ENCODE measurements at regions of chr4 and their contacts with region 1.

Region 1: DNA sequence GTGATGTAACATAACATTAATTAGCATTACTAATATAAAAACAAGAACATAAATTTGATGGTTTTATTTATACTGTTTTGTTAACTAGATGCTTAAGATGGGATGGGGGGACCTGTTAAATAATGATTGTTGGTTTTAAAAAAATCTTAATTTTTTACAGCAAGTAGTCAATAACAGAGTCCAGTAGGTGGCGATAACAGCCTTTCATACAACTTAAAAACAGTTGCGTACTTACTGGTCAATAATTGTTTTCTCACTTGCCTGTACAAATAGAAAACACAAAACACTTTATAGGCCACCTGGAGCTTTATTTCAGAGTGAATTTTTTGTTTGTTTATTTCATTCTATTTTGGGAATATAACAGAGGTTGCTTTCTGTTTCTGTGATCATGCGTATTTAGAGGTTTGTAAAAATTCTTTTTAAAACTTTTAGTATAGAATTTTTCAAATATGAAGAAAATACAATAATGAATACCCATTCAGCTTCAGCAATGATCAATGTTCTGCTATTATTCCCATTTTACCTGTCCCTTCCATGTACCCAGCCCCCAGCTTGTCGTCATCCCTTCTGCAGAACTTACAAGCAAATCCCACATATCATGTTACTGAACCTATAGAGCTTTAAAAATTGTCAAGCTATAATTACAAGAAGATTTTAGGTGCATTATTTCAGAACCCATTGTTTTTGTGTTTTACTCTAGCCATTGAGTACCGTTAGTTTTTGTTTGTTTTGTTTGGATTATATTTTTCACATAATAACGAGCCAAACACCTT is 97.1 kb downstream of the MRPL1 start:
- DNase-seq: no peak
- H3K4me3 ChIP-seq: peak overlapping the region in 1 of 2 donors; percentile 25
- H3K27ac ChIP-seq: no peak overlapping the region
- H3K4me1 ChIP-seq: no peaks in the 10 kb centered on the region
- H3K27me3 ChIP-seq: no peaks in the 10 kb centered on the region
- CTCF ChIP-seq: peak; percentile 24 to 59 (median 46)

Region 2: GRCh38 chr4:78517050-78517652 is 557.4 kb after region 1 on chr4:
- intact Hi-C with region 1: loop called (anchors 5 kb)
- DNase-seq: no peak
- H3K4me3 ChIP-seq: no peak overlapping the region
- H3K27ac ChIP-seq: no peak overlapping the region
- H3K4me1 ChIP-seq: no peaks in the 10 kb centered on the region
- H3K27me3 ChIP-seq: no peaks in the 10 kb centered on the region
- CTCF ChIP-seq: peak in 2 of 3 experiments; percentile 27 to 44